Naive thymus-derived CD4-positive, alpha-beta T cell (primary cell): ENCODE measurements at regions of chr10 and their contacts with region 1.

Region 1: DNA sequence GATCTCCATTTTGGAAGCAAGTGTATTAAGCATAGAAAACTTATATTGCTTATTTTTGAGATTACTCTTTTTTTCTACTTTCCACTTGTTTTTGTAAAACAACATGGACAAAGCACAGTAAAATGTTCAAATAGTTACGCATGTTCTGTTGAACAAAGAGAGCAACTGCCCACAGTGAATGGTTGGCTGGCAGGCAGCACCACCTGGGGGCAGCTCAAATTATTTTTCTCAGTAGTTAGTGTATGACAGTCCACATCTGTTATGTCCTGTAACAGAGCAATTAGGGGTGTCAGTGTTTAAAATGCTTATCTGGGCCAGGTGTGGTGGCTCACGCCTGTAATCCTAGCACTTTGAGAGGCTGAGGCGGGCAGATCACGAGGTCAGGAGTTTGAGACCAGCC is 46.1 kb upstream of the CACUL1 start:
- DNase-seq: peak in 3 of 9 donors; percentile 9 to 16 (median 11)
- ATAC-seq: peak; percentile 59
- H3K4me3 ChIP-seq: no peak overlapping the region
- H3K4me3 Mint-ChIP-seq: no peak overlapping the region
- H3K27ac ChIP-seq: no peak overlapping the region
- H3K27ac Mint-ChIP-seq: no peak overlapping the region
- H3K4me1 ChIP-seq: no peaks in the 10 kb centered on the region
- H3K4me1 Mint-ChIP-seq: no peaks in the 10 kb centered on the region
- H3K27me3 ChIP-seq: no peaks in the 10 kb centered on the region
- H3K27me3 Mint-ChIP-seq: peaks cover 4 to 31% (median 12%) of the 10 kb centered on the region in 5 donors

Region 2: DNA sequence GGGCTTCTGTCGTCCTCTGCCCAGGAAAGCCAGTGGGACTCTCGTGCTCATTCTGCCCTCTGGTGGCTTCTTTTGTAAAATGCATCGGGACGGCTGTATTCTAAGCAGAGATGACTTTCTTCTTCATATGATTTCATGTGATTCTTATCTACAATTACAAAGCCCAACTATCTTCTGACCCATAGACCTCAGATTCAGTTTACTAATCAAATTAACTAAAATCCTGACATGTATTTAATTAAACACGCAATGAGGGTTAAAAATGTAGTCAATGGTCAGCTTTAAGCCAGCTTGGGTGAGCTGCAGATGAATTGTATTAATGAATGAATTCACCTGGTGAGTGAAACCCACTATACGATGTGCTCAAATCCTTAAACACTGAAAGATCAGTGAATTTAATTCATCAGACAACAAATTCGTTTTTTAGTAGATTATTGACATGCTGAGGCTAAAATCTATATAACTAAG is 341.2 kb before region 1 on chr10:
- CTCF ChIA-PET with region 1: interaction called, 4 read pairs
- POLR2A ChIA-PET with region 1: no interaction called
- intact Hi-C with region 1: loop called in 1 of 2 experiments (anchors 2 kb)
- DNase-seq: peak in 7 of 9 donors; percentile 14 to 46 (median 37)
- ATAC-seq: peak; percentile 65
- H3K4me3 ChIP-seq: peak overlapping the region; percentile 45
- H3K4me3 Mint-ChIP-seq: peak overlapping the region; percentile 46 to 78 (median 62)
- H3K27ac ChIP-seq: no peak overlapping the region
- H3K27ac Mint-ChIP-seq: no peak overlapping the region
- H3K4me1 ChIP-seq: no peaks in the 10 kb centered on the region
- H3K4me1 Mint-ChIP-seq: peaks cover 0 to 9% (median 8%) of the 10 kb centered on the region in 7 donors
- H3K27me3 ChIP-seq: no peaks in the 10 kb centered on the region
- H3K27me3 Mint-ChIP-seq: peaks cover 37 to 65% (median 42%) of the 10 kb centered on the region in 5 donors

Region 3: DNA sequence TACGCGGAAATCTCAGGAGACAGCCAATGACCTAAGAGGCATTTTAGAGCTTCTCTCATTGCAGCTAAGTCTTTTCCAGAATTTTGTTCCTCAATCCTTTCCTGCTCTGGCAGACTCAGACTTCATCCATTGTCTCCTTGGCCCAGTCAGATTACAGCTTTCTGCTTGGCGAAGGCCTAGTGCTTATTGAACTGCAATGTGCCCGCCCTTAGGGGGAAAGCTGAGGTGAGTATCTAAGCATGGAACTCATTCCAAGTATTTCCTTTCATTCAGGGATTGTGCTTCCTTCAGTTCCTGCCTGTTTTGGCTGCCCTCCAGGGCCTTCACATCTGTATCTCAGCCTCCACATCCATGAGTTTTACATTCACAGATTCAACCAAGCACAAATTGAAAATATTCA is 243.0 kb before region 1 on chr10:
- CTCF ChIA-PET with region 1: no interaction called
- POLR2A ChIA-PET with region 1: no interaction called
- intact Hi-C with region 1: no loop called
- DNase-seq: no peak
- ATAC-seq: no peak
- H3K4me3 ChIP-seq: no peak overlapping the region
- H3K4me3 Mint-ChIP-seq: no peak overlapping the region
- H3K27ac ChIP-seq: no peak overlapping the region
- H3K27ac Mint-ChIP-seq: no peak overlapping the region
- H3K4me1 ChIP-seq: no peaks in the 10 kb centered on the region
- H3K4me1 Mint-ChIP-seq: no peaks in the 10 kb centered on the region
- H3K27me3 ChIP-seq: no peaks in the 10 kb centered on the region
- H3K27me3 Mint-ChIP-seq: peaks cover 45 to 58% (median 52%) of the 10 kb centered on the region in 5 donors

Region 4: DNA sequence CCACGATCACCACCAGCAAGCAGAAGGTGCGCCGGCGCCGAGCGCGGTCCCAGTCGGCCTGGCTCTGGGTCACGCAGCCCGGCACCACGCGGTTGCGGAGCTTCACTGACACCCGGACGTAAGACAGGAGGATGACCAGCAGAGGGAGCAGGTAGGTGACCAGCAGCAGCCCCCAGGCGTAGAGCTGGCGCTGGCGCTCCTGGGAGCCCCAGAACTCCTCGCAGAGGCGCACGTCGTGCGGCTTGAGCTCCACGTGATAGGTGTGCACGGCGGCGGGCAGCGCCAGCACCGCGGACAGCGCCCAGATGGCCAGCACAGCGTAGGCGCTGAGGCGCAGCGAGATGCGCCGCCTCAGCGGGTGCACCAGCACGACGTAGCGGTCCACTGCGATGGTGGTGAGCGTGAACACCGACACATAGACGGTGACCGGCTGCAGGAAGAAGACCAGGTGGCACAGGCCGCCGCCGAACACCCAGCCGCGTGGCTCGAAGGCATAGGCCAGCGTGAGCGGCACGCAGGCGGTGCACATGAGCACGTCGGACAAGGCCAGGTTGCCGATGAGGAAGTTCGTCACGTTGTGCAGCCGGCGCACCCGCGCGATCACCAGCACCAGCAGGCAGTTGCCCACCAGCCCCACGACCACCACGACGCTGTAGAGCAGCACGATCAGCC is 206.4 kb before region 1 on chr10:
- CTCF ChIA-PET with region 1: no interaction called
- POLR2A ChIA-PET with region 1: no interaction called
- intact Hi-C with region 1: loop called in 1 of 2 experiments (anchors 1 kb)
- DNase-seq: peak; percentile 21 to 59 (median 35)
- ATAC-seq: peak; percentile 81
- H3K4me3 ChIP-seq: no peak overlapping the region
- H3K4me3 Mint-ChIP-seq: peak overlapping the region in 7 of 10 donors; percentile 18 to 75 (median 53)
- H3K27ac ChIP-seq: no peak overlapping the region
- H3K27ac Mint-ChIP-seq: no peak overlapping the region
- H3K4me1 ChIP-seq: peaks cover 0 to 17% of the 10 kb centered on the region in 2 donors
- H3K4me1 Mint-ChIP-seq: peaks cover 9 to 37% (median 27%) of the 10 kb centered on the region in 7 donors
- H3K27me3 ChIP-seq: peaks cover 0 to 17% of the 10 kb centered on the region in 2 donors
- H3K27me3 Mint-ChIP-seq: peaks cover 54 to 67% (median 65%) of the 10 kb centered on the region in 5 donors

Region 5: GRCh38 chr10:118720685-118721538 is 80.0 kb before region 1 on chr10:
- CTCF ChIA-PET with region 1: no interaction called
- POLR2A ChIA-PET with region 1: no interaction called
- intact Hi-C with region 1: loop called in 1 of 2 experiments (anchors 1 kb)
- DNase-seq: peak; percentile 15 to 75 (median 64)
- ATAC-seq: peak; percentile 78
- H3K4me3 ChIP-seq: no peak overlapping the region
- H3K4me3 Mint-ChIP-seq: no peak overlapping the region
- H3K27ac ChIP-seq: no peak overlapping the region
- H3K27ac Mint-ChIP-seq: peak overlapping the region in 1 of 9 donors; percentile 21
- H3K4me1 ChIP-seq: peaks cover 0 to 8% of the 10 kb centered on the region in 2 donors
- H3K4me1 Mint-ChIP-seq: peaks cover 6 to 36% (median 24%) of the 10 kb centered on the region in 7 donors
- H3K27me3 ChIP-seq: no peaks in the 10 kb centered on the region
- H3K27me3 Mint-ChIP-seq: no peaks in the 10 kb centered on the region